Natural killer cell (primary cell): ENCODE measurements at regions of chr14 and their contacts with region 1.

Region 1: GRCh38 chr14:23006544-23007419 is 3.2 kb downstream of the C14orf93 start:
- DNase-seq: peak; percentile 95 to 99
- ATAC-seq: peak; percentile 91 to 99 (median 93)
- H3K4me3 ChIP-seq: peak overlapping the region; percentile 93
- H3K4me3 Mint-ChIP-seq: peak overlapping the region; percentile 98
- H3K27ac ChIP-seq: peak overlapping the region; percentile 91
- H3K27ac Mint-ChIP-seq: peak overlapping the region; percentile 97 to 98
- H3K4me1 ChIP-seq: peaks cover 23% of the 10 kb centered on the region
- H3K4me1 Mint-ChIP-seq: peaks cover 30 to 38% of the 10 kb centered on the region in 2 donors
- H3K27me3 ChIP-seq: no peaks in the 10 kb centered on the region
- H3K27me3 Mint-ChIP-seq: no peaks in the 10 kb centered on the region
- CTCF ChIP-seq: peak; percentile 18

Region 2: GRCh38 chr14:23034483-23035302 is 27.9 kb after region 1 on chr14 and contains the start of gene PSMB5:
- intact Hi-C with region 1: loop called (anchors 1 kb)
- DNase-seq: peak; percentile 76 to 96
- ATAC-seq: peak; percentile 93 to 98 (median 94)
- H3K4me3 ChIP-seq: peak within 1 kb of the TSS; percentile 74
- H3K4me3 Mint-ChIP-seq: peak within 1 kb of the TSS; percentile 90
- H3K27ac ChIP-seq: peak within 1 kb of the TSS; percentile 93
- H3K27ac Mint-ChIP-seq: peak within 1 kb of the TSS; percentile 98 to 100
- H3K4me1 ChIP-seq: peaks cover 15% of the 10 kb centered on the region
- H3K4me1 Mint-ChIP-seq: peaks cover 25 to 32% of the 10 kb centered on the region in 2 donors
- H3K27me3 ChIP-seq: no peaks in the 10 kb centered on the region
- H3K27me3 Mint-ChIP-seq: no peaks in the 10 kb centered on the region
- CTCF ChIP-seq: no peak
- total RNA-seq, gene PSMB5: 15.7 to 19.1 (median 16.4) TPM